Caco-2 (cell line): ENCODE measurements at regions of chr15 and their contacts with region 1.

Region 1: GRCh38 chr15:58433597-58434333 is 2.0 kb downstream of the LIPC start:
- DNase-seq: no peak
- H3K4me3 ChIP-seq: no peak overlapping the region
- H3K4me3 Mint-ChIP-seq: peak overlapping the region; percentile 74
- H3K27ac Mint-ChIP-seq: peak overlapping the region; percentile 77
- H3K4me1 ChIP-seq: peaks cover 55% of the 10 kb centered on the region
- H3K4me1 Mint-ChIP-seq: peaks cover 15% of the 10 kb centered on the region
- H3K27me3 ChIP-seq: no peaks in the 10 kb centered on the region
- H3K27me3 Mint-ChIP-seq: no peaks in the 10 kb centered on the region
- CTCF ChIP-seq: peak in 1 of 2 experiments; percentile 3

Region 2: DNA sequence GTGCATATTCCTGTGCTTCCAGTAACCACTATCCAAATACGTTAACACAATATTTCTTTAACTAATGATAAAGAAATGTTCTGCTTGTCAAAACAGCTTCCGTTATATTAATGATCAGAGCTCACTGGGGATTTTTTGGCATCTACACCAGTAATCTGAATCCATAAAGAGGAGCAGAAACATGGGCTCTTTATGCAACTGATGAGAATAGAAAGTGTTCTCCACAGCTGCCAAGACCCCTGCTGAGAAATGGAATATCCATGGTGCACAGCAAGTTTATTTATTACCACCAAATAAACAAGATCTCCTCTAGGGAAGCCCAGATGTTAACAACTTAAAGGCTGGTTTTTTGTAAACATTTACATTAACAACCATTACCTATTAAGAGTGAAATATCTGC is 422.8 kb before region 1 on chr15:
- CTCF ChIA-PET with region 1: no interaction called
- POLR2A ChIA-PET with region 1: no interaction called
- intact Hi-C with region 1: no loop called
- DNase-seq: no peak
- H3K4me3 ChIP-seq: no peak overlapping the region
- H3K4me3 Mint-ChIP-seq: no peak overlapping the region
- H3K27ac Mint-ChIP-seq: no peak overlapping the region
- H3K4me1 ChIP-seq: no peaks in the 10 kb centered on the region
- H3K4me1 Mint-ChIP-seq: no peaks in the 10 kb centered on the region
- H3K27me3 ChIP-seq: no peaks in the 10 kb centered on the region
- H3K27me3 Mint-ChIP-seq: peaks cover 2% of the 10 kb centered on the region
- CTCF ChIP-seq: no peak

Region 3: GRCh38 chr15:58331903-58332675 is 101.7 kb before region 1 on chr15:
- CTCF ChIA-PET with region 1: no interaction called
- POLR2A ChIA-PET with region 1: no interaction called
- intact Hi-C with region 1: loop called (anchors 5 kb)
- DNase-seq: peak; percentile 84 to 91
- H3K4me3 ChIP-seq: no peak overlapping the region
- H3K4me3 Mint-ChIP-seq: peak overlapping the region; percentile 30
- H3K27ac Mint-ChIP-seq: peak overlapping the region; percentile 94
- H3K4me1 ChIP-seq: peaks cover 36% of the 10 kb centered on the region
- H3K4me1 Mint-ChIP-seq: peaks cover 42% of the 10 kb centered on the region
- H3K27me3 ChIP-seq: no peaks in the 10 kb centered on the region
- H3K27me3 Mint-ChIP-seq: no peaks in the 10 kb centered on the region
- CTCF ChIP-seq: no peak